Activated CD4-positive, alpha-beta memory T cell treated with anti-CD3 and anti-CD28 coated beads, Interleukin-2, amount 10 ng/mL, durations not matched to agents 7 days and 5 days (primary cell): ENCODE measurements at regions of chr19 and their contacts with region 1.

Region 1: DNA sequence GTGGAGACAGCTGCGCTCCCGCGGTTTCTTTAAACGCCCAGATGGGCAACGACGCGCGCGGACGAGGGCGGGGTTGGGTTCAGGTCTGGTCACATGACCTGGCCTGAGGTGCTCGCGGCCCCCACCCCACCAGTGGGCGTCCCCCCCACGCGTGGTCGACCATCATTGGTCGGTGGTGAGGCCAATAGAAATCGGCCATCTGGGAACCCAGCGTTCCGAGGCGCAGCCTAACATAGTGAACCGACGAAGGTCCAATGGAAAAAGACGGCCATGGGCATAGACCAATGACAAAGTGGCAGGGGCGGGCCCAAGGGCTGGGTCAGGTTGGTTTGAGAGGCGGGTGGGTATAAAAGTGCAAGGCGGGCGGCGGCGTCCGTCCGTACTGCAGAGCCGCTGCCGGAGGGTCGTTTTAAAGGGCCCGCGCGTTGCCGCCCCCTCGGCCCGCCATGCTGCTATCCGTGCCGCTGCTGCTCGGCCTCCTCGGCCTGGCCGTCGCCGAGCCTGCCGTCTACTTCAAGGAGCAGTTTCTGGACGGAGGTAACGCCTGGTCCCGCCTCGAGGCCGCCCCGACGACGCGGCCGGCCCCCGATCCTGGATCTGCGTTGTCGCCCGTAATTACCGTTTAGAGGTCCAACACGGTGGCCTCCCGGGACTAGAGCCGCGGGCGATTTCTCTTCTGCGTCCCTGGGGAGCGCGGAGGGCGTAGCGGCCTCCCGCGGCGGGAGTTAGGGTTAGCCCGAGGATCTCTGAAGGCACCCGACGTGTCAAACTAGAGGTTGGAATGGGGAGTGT is at the start of gene CALR:
- DNase-seq: peak; percentile 99
- H3K4me3 Mint-ChIP-seq: peak within 1 kb of the TSS; percentile 99
- H3K27ac Mint-ChIP-seq: peak within 1 kb of the TSS; percentile 92
- H3K4me1 Mint-ChIP-seq: peaks cover 61% of the 10 kb centered on the region
- H3K27me3 Mint-ChIP-seq: no peaks in the 10 kb centered on the region
- total RNA-seq, gene CALR: 640 to 660 TPM

Region 2: DNA sequence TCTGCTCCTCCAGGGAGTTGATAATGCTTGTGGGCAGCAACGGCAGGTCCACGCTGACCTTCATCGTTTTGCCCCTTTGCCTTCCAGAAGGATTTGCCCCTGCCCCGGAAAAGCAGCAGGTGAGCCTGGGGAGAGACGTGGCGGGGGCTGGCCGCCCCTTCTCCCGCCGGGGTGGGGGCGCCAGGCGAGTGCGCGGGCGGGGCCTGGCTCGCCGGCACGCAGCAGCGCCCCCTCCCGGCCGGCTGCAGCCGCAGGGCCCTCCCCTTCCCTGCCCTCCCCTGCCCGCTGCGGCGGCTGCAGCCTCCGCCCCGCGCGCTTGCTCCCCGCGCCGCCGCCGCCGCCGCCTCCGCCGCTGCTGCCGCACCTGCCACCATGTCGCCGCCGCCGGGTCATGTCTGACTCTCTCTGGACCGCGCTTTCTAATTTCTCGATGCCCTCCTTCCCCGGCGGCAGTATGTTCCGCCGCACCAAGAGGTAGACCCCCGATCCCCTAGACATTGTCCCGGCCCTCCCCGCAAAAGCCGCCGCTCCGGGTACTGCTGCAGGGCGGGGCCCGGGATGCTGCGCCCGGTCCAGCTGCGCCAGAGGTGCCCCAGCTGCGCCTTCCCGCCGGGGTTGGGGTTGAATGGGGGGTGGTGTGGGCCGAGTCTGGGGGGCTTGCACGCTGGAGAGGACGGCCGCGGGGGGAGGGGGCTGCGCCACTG is 100.1 kb before region 1 on chr19 and contains the start of gene MAST1:
- CTCF ChIA-PET with region 1: no interaction called
- POLR2A ChIA-PET with region 1: no interaction called
- DNase-seq: peak; percentile 61
- H3K4me3 Mint-ChIP-seq: peak within 1 kb of the TSS; percentile 51
- H3K27ac Mint-ChIP-seq: no peak within 1 kb of the TSS
- H3K4me1 Mint-ChIP-seq: peaks cover 41% of the 10 kb centered on the region
- H3K27me3 Mint-ChIP-seq: peaks cover 76% of the 10 kb centered on the region
- total RNA-seq, gene MAST1: 1.1 to 2.1 TPM

Region 3: DNA sequence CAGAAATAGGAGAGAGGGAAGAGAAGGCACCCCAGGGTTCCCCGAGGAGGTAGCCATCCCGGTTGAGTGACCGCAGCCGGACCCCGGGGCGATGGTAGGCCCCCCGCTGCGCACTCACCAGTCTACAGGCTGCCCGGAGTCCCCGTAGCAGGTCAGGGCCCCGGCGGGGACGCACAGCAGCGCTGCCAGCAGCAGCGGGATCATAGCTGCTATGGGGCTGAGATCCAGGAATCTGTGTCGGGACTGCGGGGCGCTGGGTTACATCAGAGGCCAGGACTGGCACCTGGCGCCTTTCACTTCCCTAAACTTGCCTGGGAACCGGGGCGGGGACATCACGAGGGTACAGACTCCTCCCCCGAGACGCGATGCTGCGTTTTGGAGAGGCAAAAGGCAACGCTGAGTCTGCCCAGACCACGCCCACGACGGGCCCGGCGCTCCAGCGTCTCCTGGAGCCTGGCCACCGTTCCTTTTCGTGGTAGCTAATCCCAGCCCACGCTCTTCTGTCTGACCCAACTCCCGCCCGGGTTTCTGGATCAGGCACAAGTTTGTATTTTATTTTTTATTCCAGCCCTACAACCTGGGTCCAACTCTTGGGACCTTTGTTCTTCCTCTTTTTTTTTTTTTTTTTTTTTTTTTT is 57.1 kb before region 1 on chr19 and contains the start of gene DNASE2:
- CTCF ChIA-PET with region 1: interaction called, 15 read pairs
- POLR2A ChIA-PET with region 1: interaction called, 19 read pairs
- DNase-seq: peak; percentile 94
- H3K4me3 Mint-ChIP-seq: peak within 1 kb of the TSS; percentile 83
- H3K27ac Mint-ChIP-seq: peak within 1 kb of the TSS; percentile 83
- H3K4me1 Mint-ChIP-seq: peaks cover 40% of the 10 kb centered on the region
- H3K27me3 Mint-ChIP-seq: no peaks in the 10 kb centered on the region
- total RNA-seq, gene DNASE2: 37.6 to 39.3 TPM

Region 4: DNA sequence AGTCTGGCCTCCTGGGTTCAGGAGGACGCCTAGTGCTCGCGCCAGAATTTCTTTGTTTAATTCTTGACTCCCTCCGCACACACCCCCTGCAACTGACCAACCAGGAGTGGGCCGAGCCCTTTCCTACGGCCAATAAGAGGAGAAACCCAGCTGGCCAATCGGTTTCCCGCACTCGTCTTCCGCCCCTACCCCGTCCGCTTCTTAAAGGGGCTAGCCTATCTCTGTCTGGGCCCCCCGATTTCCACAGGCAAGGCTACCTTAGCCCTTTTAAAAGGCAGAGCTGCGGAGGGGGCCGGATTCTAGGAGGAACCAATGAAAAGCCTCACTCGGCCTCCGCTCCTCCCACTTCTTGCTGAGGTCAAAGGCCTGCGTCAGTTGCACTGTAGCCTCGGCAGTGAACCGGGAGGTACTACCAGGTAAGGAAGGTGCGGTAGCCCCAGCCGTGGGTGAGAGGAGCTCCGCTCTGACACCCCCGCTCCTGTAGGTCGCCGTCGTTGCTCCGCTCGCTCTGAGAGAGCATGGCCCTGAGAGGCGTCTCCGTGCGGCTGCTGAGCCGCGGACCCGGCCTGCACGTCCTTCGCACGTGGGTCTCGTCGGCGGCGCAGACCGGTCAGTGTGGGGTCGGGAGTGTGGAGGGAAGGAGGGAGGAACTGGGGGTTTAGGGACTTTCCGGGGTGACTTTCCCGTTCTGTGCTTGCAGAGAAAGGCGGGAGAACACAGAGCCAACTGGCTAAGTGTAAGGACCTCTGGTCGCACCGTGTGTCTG is 47.5 kb before region 1 on chr19 and contains the start of gene GCDH:
- CTCF ChIA-PET with region 1: interaction called, 10 read pairs
- POLR2A ChIA-PET with region 1: interaction called, 26 read pairs
- DNase-seq: peak; percentile 98
- H3K4me3 Mint-ChIP-seq: peak within 1 kb of the TSS; percentile 98
- H3K27ac Mint-ChIP-seq: peak within 1 kb of the TSS; percentile 79
- H3K4me1 Mint-ChIP-seq: peaks cover 33% of the 10 kb centered on the region
- H3K27me3 Mint-ChIP-seq: no peaks in the 10 kb centered on the region
- total RNA-seq, gene GCDH: 23.3 to 25.1 TPM

Region 5: GRCh38 chr19:12913011-12913561 is 25.3 kb before region 1 on chr19:
- CTCF ChIA-PET with region 1: no interaction called
- POLR2A ChIA-PET with region 1: interaction called, 37 read pairs
- DNase-seq: no peak
- H3K4me3 Mint-ChIP-seq: no peak overlapping the region
- H3K27ac Mint-ChIP-seq: no peak overlapping the region
- H3K4me1 Mint-ChIP-seq: peaks cover 30% of the 10 kb centered on the region
- H3K27me3 Mint-ChIP-seq: no peaks in the 10 kb centered on the region

Region 6: DNA sequence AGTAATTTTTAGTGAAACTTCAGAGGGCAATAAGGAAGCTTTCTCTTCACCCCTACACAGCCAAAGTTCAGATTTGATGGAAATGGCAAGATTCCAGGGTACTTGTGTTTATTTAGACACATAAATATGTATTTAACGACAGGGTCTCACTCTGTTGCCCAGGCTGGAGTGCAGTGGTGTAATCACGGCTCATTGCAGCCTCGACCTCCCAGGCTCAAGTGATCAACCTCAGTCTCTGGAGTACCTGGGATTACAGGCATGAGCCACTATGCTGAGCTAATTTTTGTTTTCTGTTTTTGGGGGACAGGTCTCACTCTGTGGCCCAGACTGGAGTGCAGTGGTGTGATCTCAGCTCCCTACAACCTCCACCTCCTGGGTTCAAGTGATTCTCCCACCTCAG is 17.4 kb before region 1 on chr19:
- CTCF ChIA-PET with region 1: interaction called, 3 read pairs
- POLR2A ChIA-PET with region 1: interaction called, 37 read pairs
- DNase-seq: no peak
- H3K4me3 Mint-ChIP-seq: no peak overlapping the region
- H3K27ac Mint-ChIP-seq: peak overlapping the region; percentile 30
- H3K4me1 Mint-ChIP-seq: peaks cover 24% of the 10 kb centered on the region
- H3K27me3 Mint-ChIP-seq: no peaks in the 10 kb centered on the region

Region 7: DNA sequence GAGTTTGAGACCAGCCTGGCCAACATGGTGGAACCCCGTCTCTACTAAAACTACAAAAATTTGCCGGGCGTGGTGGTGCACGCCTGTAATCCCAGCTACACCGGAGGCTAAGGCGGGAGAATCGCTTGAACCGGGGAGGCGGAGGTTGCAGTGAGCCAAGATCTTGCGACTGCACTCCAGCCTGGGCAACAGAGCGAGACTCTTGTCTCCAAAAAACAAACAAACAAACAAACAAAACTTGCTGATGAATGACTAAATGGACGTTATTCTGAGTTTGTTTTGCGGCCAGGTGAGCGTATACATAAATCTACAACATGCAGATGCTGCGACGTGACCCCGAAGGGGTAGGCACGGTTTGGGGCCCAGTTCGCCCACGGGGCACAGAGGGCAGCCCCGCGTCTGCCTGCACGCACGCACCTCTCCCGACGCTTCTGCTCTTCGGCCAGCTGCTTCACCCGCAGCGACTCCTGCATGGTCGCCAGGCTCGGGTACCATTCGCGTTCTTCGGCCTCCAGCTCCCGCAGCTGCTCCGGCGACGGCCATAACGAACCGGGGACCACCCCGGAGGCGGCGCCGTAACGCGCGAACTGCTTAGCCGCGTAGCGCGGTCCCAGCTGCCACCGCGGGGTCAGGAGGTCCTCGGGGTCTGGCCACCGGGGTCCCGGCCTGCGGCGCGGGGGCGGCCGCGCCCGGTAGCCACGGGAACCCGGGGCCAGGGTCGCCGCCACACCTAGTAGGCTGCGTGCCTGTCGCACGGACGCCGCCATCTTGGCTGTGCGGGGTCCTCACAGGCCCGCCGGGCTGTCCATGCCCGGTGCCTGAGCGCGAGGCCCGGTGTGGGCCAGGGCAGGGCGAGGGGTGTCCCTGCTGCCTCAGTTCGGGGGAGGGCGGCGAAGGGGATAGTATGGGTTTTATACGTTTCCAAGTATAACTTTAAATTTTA is 18.3 kb after region 1 on chr19 and contains the start of gene GADD45GIP1:
- CTCF ChIA-PET with region 1: no interaction called
- POLR2A ChIA-PET with region 1: interaction called, 16 read pairs
- DNase-seq: peak; percentile 86
- H3K4me3 Mint-ChIP-seq: peak within 1 kb of the TSS; percentile 85
- H3K27ac Mint-ChIP-seq: peak within 1 kb of the TSS; percentile 93
- H3K4me1 Mint-ChIP-seq: peaks cover 34% of the 10 kb centered on the region
- H3K27me3 Mint-ChIP-seq: peaks cover 2% of the 10 kb centered on the region
- total RNA-seq, gene GADD45GIP1: 17.5 to 18.4 TPM